Activated naive CD4-positive, alpha-beta T cell treated with anti-CD3 and anti-CD28 coated beads for 36 hours (primary cell): ENCODE measurements at regions of chr5 and their contacts with region 1.

Region 1: GRCh38 chr5:149618581-149619251 is 37.4 kb downstream of the ARHGEF37 start:
- DNase-seq: peak; percentile 66
- H3K4me3 Mint-ChIP-seq: no peak overlapping the region
- H3K27ac Mint-ChIP-seq: no peak overlapping the region
- H3K4me1 Mint-ChIP-seq: peaks cover 10% of the 10 kb centered on the region
- H3K27me3 Mint-ChIP-seq: no peaks in the 10 kb centered on the region

Region 2: DNA sequence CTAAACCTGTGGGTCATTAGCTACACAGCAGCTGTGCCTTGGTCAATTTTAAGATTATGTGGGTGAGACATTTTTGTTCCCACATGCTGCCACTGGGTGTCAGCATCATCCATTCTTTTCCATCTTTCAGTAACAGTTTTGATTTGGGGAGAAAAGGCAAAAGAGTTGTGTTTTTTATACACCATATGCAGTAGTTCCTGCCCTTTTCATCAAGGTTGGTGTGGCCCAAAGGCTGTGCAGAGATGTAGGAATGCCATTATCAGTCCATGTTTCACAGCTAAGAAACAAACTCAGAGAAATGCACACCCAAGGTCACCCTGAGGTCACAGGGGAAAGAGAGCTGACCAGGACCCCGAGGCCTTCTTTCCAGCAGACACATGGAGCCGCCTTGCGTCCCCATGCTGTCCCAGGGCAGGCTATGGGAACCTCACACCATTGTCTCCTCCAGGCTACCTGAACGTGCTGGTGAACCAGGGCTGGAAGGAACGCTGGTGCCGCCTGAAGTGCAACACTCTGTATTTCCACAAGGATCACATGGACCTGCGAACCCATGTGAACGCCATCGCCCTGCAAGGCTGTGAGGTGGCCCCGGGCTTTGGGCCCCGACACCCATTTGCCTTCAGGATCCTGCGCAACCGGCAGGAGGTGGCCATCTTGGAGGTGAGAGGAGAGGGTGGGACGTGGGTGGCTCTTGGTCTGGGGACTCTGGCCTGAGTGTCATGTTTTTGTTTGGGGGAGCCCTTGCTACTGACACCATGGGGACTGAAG is 301.3 kb before region 1 on chr5:
- CTCF ChIA-PET with region 1: interaction called, 3 read pairs
- intact Hi-C with region 1: loop called (anchors 5 kb)
- DNase-seq: peak; percentile 58
- H3K4me3 Mint-ChIP-seq: no peak overlapping the region
- H3K27ac Mint-ChIP-seq: no peak overlapping the region
- H3K4me1 Mint-ChIP-seq: no peaks in the 10 kb centered on the region
- H3K27me3 Mint-ChIP-seq: no peaks in the 10 kb centered on the region

Region 3: GRCh38 chr5:149442563-149443182 is 176.0 kb before region 1 on chr5:
- CTCF ChIA-PET with region 1: interaction called, 19 read pairs
- intact Hi-C with region 1: loop called (anchors 1 kb)
- DNase-seq: peak; percentile 82
- H3K4me3 Mint-ChIP-seq: no peak overlapping the region
- H3K27ac Mint-ChIP-seq: no peak overlapping the region
- H3K4me1 Mint-ChIP-seq: peaks cover 18% of the 10 kb centered on the region
- H3K27me3 Mint-ChIP-seq: no peaks in the 10 kb centered on the region

Region 4: DNA sequence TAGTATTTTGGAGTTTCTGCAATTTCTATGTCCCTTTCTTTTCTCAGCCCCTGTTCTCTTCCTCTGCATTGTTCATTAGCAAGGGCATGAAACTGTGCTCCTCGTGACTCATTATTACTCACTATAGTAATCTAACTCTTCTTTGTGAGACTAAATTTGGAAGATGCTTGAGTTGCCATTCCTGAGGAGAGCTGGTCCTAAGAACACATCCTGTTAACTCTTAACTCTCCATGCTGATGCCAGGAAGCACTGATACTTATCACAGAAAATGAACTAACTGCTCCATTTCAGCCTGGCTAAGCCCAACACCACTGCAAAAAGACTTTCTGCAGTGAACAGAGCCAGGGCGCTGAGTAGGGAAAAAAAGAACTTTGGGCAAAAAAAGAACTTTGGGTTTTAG is 56.9 kb before region 1 on chr5:
- CTCF ChIA-PET with region 1: interaction called, 8 read pairs
- intact Hi-C with region 1: loop called (anchors 1 kb)
- DNase-seq: peak; percentile 20
- H3K4me3 Mint-ChIP-seq: no peak overlapping the region
- H3K27ac Mint-ChIP-seq: peak overlapping the region; percentile 70
- H3K4me1 Mint-ChIP-seq: peaks cover 32% of the 10 kb centered on the region
- H3K27me3 Mint-ChIP-seq: no peaks in the 10 kb centered on the region

Region 5: GRCh38 chr5:149636851-149637246 is 18.1 kb after region 1 on chr5:
- CTCF ChIA-PET with region 1: interaction called, 11 read pairs
- intact Hi-C with region 1: no loop called
- DNase-seq: peak; percentile 82
- H3K4me3 Mint-ChIP-seq: no peak overlapping the region
- H3K27ac Mint-ChIP-seq: no peak overlapping the region
- H3K4me1 Mint-ChIP-seq: peaks cover 13% of the 10 kb centered on the region
- H3K27me3 Mint-ChIP-seq: no peaks in the 10 kb centered on the region

Region 6: GRCh38 chr5:150286890-150287219 is 668.1 kb after region 1 on chr5:
- CTCF ChIA-PET with region 1: no interaction called
- intact Hi-C with region 1: no loop called
- DNase-seq: no peak
- H3K4me3 Mint-ChIP-seq: no peak overlapping the region
- H3K27ac Mint-ChIP-seq: no peak overlapping the region
- H3K4me1 Mint-ChIP-seq: no peaks in the 10 kb centered on the region
- H3K27me3 Mint-ChIP-seq: no peaks in the 10 kb centered on the region